ENCODE measurements at regions of chr1 and their contacts with region 1.

Region 1: GRCh38 chr1:60950224-60951063 is 131.9 kb upstream of the NFIA start:
- DNase-seq: no peak
- ATAC-seq: no peak

Region 2: GRCh38 chr1:60861961-60862567 is 88.4 kb before region 1 on chr1:
- intact Hi-C with region 1: loop called (anchors 5 kb)
- DNase-seq: no peak
- ATAC-seq: no peak

Region 3: GRCh38 chr1:60898987-60899386 is 51.5 kb before region 1 on chr1:
- intact Hi-C with region 1: loop called (anchors 5 kb)
- DNase-seq: no peak
- ATAC-seq: no peak